ENCODE measurements at regions of chr4 and their contacts with region 1.

Region 1: DNA sequence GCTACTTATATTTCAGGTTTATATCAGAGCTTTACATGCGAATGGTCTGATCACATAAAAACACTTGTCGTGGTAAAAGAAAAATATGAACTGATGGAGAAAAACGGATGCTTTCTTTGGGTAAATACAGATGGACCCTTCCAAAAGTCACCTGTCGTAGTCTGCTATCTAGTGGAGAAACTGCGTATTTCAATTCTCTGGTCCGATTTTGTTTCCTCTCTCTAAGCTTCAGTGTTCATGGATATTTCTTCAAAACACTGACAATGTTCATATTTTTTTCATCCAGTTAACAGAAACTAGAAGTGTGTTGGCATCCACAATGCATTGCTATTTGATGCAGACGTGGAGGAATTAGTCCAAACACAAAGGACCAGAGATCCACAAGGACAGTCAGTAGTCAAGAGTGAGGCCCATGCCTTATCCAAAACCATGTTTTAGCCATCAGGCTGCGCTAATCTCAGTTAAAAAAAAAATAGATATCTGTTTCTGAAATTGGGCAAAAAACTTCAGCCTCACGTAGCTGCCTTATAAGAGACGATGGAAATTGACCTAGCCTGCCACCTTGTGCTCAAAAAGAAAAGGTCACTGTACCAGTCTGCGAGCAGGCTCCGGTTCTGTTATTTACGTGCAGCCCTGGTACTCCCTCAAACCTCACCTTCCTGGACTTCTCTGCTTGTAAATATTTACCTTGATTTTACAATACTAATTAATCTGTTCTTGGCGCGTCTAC is 16.0 kb downstream of the MEPE start:
- DNase-seq: peak; percentile 84
- H3K4me3 ChIP-seq: peak overlapping the region; percentile 56
- H3K27ac ChIP-seq: no peak overlapping the region
- H3K4me1 ChIP-seq: peaks cover 10% of the 10 kb centered on the region
- H3K27me3 ChIP-seq: no peaks in the 10 kb centered on the region

Region 2: DNA sequence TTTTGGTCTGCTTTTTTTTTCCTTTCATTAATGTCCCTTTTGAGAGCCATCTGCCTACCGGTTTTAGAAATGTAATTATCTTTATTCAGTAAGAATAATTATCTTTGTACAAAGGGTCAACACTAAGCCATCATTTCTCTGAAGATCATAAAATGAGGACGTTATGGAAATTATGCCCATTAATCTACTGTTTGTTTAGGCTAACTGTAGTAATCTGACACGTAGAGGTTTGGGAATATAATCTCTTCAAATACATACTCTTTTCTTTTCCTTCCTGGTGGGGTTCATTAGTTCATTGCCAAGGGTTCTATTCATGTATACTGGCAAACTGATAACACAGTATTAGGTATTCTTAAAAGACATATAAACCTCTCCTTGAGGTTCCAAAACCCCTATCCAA is 522.3 kb before region 1 on chr4:
- in situ Hi-C with region 1: loop called (anchors 25 kb)
- DNase-seq: no peak
- H3K4me3 ChIP-seq: no peak overlapping the region
- H3K27ac ChIP-seq: no peak overlapping the region
- H3K4me1 ChIP-seq: no peaks in the 10 kb centered on the region
- H3K27me3 ChIP-seq: no peaks in the 10 kb centered on the region

Region 3: GRCh38 chr4:87559109-87559837 is 289.5 kb before region 1 on chr4:
- in situ Hi-C with region 1: loop called (anchors 10 kb)
- DNase-seq: no peak
- H3K4me3 ChIP-seq: no peak overlapping the region
- H3K27ac ChIP-seq: no peak overlapping the region
- H3K4me1 ChIP-seq: peaks cover 7% of the 10 kb centered on the region
- H3K27me3 ChIP-seq: no peaks in the 10 kb centered on the region

Region 4: DNA sequence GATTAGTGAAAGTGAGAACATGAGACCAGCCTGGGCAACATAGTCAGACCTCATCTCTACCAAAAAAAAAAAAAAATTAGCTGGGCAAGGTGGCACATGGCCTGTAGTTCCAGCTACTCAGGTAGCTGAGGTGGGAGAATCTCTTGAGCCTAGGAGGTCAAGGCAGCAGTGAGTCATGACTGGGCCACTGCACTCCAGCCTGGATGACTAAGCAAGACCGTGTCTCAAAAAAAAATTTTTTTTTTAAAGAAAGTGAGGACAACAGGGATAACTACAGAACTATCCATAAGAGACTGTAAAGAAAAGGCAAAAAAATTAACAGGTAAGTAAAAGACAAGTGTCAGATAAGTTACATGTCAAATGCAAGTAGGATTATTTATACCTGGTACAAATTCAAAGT is 113.2 kb after region 1 on chr4:
- in situ Hi-C with region 1: loop called (anchors 10 kb)
- DNase-seq: peak; percentile 69
- H3K4me3 ChIP-seq: no peak overlapping the region
- H3K27ac ChIP-seq: no peak overlapping the region
- H3K4me1 ChIP-seq: no peaks in the 10 kb centered on the region
- H3K27me3 ChIP-seq: no peaks in the 10 kb centered on the region

Region 5: GRCh38 chr4:88211473-88212252 is 362.9 kb after region 1 on chr4:
- in situ Hi-C with region 1: loop called (anchors 25 kb)
- DNase-seq: peak; percentile 55
- H3K4me3 ChIP-seq: no peak overlapping the region
- H3K27ac ChIP-seq: no peak overlapping the region
- H3K4me1 ChIP-seq: no peaks in the 10 kb centered on the region
- H3K27me3 ChIP-seq: 0 out of 2 replicates have a peak, but pooled peaks cover 5% of the 10 kb centered on the region